OCI-LY7 (cell line): ENCODE measurements at regions of chr22 and their contacts with region 1.

Region 1: DNA sequence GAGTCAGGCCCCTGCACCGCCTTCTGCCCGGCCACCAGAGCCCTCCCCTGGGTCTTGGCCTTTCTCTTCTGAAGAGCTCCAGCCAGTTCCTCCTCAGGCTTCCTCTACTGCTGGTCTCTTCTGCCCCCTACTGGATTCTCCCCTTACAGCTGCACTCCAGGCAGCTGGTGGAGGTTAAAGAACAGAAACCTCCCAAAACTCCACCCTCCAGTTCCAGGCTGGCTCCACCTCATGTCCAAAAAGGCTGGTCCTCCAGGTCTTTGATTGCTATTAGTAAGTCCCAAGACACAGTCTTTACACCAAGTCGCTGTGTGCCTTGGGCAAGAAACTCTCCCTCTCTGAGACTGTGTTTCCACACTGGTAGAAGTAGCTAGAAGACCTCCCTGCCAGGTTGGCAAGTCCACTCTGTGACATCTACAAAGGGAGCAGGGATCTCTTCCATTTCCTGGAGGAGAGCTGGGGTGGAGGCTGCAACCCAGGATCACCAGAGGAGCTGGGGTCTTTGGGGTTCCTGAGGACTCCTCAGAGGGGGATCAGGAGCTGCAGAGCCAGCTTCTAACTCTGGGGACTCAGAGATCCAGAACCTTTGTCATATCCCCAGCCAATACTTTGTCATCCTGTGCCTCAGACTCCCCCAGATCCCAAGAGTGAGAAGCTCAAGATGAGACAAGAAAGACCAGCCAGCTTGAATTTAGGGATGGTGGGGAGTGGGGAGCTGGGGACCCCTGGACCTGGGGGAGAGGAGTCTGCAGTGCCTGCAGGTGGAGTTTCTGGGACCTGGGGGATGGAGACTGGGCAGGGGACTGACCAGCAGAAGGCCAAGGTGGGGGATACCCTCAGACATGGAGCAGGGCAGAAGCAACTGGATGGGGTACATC is 3.4 kb upstream of the IGLL5 start:
- DNase-seq: peak; percentile 90
- H3K4me3 ChIP-seq: peak overlapping the region; percentile 15
- H3K27ac ChIP-seq: peak overlapping the region; percentile 5
- H3K4me1 ChIP-seq: peaks cover 87% of the 10 kb centered on the region
- CTCF ChIP-seq: peak; percentile 94

Region 2: DNA sequence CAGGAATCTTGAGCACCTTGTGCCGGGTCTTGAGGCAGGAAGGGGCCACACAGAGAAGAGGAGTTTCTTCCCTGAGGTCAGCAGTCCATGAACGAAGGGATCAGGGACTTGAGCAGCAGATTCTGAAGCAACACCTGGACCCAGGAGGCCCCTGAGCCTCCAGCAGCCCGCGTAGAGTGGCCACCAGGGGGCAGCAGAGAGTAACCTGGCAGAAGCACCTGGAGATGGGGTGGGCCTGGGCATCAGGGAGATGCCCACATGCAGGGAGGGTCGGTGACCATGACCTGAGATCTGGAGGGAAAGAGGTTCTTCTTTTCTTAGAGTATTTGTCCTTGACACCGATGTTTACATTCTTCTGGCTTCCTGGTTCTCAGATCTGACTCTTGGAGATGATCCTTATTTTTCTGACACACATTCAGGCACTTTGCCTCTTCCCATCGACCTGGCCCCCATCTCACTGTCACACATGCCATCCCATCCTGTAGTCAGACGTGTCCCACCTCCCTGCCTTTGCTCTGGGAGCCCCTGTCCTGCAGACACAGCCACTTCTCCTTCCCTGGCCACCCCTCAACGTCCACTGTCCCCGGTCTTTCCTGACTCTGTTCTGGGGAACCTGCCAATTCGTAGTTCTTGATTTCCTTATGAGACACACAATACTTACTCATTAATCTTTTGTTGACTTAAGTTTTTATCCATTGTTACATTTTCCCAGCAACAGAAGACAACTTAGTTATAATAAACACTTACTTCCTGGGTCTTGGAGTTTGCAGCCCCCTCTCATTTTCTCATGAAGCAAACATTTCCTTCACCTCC is 173.3 kb before region 1 on chr22:
- CTCF ChIA-PET with region 1: interaction called, 3 read pairs
- POLR2A ChIA-PET with region 1: no interaction called
- intact Hi-C with region 1: loop called (anchors 5 kb)
- DNase-seq: peak; percentile 69
- H3K4me3 ChIP-seq: no peak overlapping the region
- H3K27ac ChIP-seq: no peak overlapping the region
- H3K4me1 ChIP-seq: peaks cover 64% of the 10 kb centered on the region
- CTCF ChIP-seq: peak; percentile 97

Region 3: GRCh38 chr22:22810018-22810427 is 74.2 kb before region 1 on chr22:
- CTCF ChIA-PET with region 1: interaction called, 8 read pairs
- POLR2A ChIA-PET with region 1: no interaction called
- intact Hi-C with region 1: loop called (anchors 1 kb)
- DNase-seq: peak; percentile 77
- H3K4me3 ChIP-seq: no peak overlapping the region
- H3K27ac ChIP-seq: no peak overlapping the region
- H3K4me1 ChIP-seq: peaks cover 35% of the 10 kb centered on the region
- CTCF ChIP-seq: peak; percentile 89

Region 4: DNA sequence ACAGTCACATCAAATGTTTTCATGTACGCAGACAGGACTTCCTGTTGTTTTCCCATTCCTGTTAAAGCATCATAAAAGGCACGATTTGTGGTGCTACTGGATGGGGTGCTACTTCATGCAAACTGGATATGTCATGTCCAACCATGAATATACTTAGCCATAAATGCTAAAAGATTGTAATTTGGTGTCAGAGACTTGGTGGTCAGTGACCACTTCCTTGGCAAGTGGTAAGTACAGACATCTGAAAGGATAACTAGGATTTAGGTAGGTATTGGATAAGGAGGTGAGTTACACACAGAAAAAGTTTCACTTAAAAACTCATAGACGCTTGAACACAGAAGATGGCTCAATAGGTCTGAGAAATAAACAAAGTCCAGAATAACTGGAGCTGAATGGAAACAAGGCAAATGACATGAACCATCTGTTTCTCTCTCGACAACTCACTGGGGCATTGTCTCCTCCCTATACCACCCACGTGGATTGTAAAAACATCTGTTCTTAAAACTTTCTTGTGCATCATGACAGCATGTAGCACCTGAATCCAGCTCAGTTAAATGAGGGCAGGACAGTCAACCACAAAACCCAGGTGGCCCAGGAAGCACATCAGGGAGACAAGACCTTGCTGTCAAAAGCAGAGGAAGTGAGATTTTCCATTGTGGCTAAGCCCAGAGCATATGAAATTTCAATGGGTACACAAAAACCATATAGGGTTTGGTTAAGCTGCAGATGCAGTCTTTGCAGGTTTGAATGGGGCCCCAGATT is 18.8 kb before region 1 on chr22:
- CTCF ChIA-PET with region 1: interaction called, 10 read pairs
- POLR2A ChIA-PET with region 1: interaction called, 11 read pairs
- intact Hi-C with region 1: loop called (anchors 1 kb)
- DNase-seq: peak; percentile 99
- H3K4me3 ChIP-seq: peak overlapping the region; percentile 32
- H3K27ac ChIP-seq: peak overlapping the region; percentile 92
- H3K4me1 ChIP-seq: peaks cover 92% of the 10 kb centered on the region
- CTCF ChIP-seq: no peak

Region 5: DNA sequence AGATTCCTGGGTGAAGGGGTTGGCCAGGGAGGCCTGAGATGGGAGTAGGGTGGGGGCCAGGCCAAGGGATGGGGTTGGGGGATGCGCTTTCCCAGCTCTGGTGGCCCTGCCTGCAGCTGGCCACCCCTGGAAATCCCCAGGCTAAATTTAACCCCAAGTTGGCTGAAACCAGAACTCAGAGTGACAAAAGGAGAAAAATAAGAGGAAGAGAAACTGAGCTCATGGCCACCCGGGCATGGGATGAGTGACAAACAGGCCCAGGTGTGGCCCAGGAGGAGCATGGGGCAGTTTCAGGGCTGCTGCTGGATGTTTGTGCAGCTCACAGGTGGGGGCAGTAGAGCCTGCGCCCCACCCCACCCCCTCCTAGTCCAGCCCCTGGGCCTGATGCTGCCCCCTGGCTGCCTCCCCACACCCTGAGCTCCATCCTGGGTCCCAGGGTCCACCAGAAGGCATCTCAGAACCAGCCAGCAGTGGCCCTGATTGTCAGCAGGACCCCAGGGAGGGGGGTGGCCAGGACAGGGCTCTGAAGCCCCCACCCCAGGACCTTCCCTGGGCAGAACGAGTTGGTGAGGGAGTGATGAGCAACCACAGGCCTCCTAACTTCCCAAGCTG is 51.4 kb after region 1 on chr22:
- CTCF ChIA-PET with region 1: interaction called, 41 read pairs
- POLR2A ChIA-PET with region 1: interaction called, 308 read pairs
- intact Hi-C with region 1: loop called (anchors 1 kb)
- DNase-seq: peak; percentile 99
- H3K4me3 ChIP-seq: peak overlapping the region; percentile 14
- H3K27ac ChIP-seq: peak overlapping the region; percentile 91
- H3K4me1 ChIP-seq: peaks cover 98% of the 10 kb centered on the region
- CTCF ChIP-seq: peak; percentile 82

Region 6: GRCh38 chr22:23128269-23129108 is 244.2 kb after region 1 on chr22:
- CTCF ChIA-PET with region 1: no interaction called
- POLR2A ChIA-PET with region 1: no interaction called
- intact Hi-C with region 1: loop called (anchors 5 kb)
- DNase-seq: peak; percentile 87
- H3K4me3 ChIP-seq: no peak overlapping the region
- H3K27ac ChIP-seq: no peak overlapping the region
- H3K4me1 ChIP-seq: peaks cover 17% of the 10 kb centered on the region
- CTCF ChIP-seq: peak; percentile 97